Heart left ventricle (tissue), 16 donors: ENCODE measurements at regions of chr14 and their contacts with region 1.

Region 1: DNA sequence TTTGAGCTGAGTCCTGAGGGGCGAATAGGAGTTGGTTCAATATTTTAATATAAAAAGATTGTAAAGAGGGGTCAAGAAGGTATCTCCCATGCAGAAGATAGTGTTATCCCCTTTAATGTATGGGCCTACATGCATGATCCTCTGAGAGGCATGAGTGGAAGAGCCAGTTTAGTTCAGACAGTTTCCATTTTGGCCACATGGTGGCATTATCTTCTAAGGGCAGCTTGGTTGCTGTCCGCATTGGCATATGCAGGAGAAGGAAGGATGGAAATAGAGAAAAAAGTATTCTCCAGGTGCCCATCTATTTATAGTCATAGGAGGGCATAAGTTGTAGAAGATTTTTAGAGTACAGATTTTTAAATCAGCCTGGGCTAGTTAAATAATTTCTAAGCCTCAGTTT is 5.4 kb downstream of the SAMD4A start:
- DNase-seq: no peak
- ATAC-seq: no peak
- H3K4me3 ChIP-seq: no peak overlapping the region
- H3K27ac ChIP-seq: no peak overlapping the region
- H3K4me1 ChIP-seq: peaks cover 3 to 82% (median 54%) of the 10 kb centered on the region in 12 donors
- H3K27me3 ChIP-seq: no peaks in the 10 kb centered on the region
- CTCF ChIP-seq: peak; percentile 16 to 57 (median 32)
- POLR2A ChIP-seq: no peak

Region 2: GRCh38 chr14:54606178-54606577 is 33.9 kb after region 1 on chr14:
- intact Hi-C with region 1: loop called in 1 of 10 experiments (anchors 5 kb)
- DNase-seq: peak; percentile 74 to 92 (median 84)
- ATAC-seq: peak; percentile 96 to 98 (median 97)
- H3K4me3 ChIP-seq: no peak overlapping the region
- H3K27ac ChIP-seq: peak overlapping the region; percentile 46 to 96 (median 85)
- H3K4me1 ChIP-seq: peaks cover 0 to 66% (median 23%) of the 10 kb centered on the region in 12 donors
- H3K27me3 ChIP-seq: no peaks in the 10 kb centered on the region
- CTCF ChIP-seq: no peak
- POLR2A ChIP-seq: no peak

Region 3: DNA sequence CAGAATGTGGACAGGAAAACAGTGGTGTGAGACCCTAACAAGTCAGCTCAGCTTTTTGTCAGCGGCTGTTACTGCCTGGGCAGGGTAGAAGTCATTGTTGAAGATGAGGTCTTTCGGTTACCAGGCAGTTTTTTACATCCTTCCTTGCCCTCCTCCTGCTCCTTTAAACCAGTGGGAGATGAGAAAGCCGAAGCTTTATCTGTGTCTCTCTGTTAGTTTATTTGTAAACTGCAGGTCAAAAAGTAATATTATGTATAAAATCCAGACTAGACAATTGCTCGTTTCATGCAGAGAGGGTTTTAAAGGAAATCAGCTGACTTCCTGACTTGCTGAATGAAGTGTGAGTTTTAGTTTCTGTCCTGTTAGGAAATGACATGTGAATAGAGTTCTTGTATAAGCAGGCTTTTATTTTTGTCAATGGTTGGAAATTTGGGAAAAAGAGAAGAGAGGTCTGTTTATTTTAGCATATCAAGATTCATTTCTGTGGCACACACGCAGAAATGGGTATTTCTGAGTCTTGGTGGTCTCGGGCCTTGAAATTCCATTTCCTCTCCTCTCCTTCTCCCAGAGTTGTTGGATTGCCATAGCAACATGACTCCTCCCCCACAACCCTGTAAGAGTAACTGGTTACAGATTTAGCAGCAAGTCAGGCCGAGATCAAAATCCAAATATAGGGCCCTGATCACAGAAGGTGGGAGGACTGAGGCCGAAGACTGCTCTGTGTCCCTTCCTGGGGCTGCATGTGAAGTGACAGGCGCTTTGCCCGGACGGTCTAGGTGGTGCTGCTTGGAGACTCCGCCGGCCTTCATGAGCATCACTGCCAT is 55.4 kb after region 1 on chr14:
- intact Hi-C with region 1: loop called in 4 of 10 experiments (anchors 2 to 10 kb)
- DNase-seq: peak in 4 of 5 donors; percentile 59 to 76 (median 70)
- ATAC-seq: peak; percentile 91 to 94 (median 93)
- H3K4me3 ChIP-seq: peak overlapping the region in 10 of 12 donors; percentile 14 to 51 (median 32)
- H3K27ac ChIP-seq: peak overlapping the region; percentile 24 to 96 (median 72)
- H3K4me1 ChIP-seq: peaks cover 16 to 76% (median 57%) of the 10 kb centered on the region in 12 donors
- H3K27me3 ChIP-seq: no peaks in the 10 kb centered on the region
- CTCF ChIP-seq: no peak
- POLR2A ChIP-seq: no peak

Region 4: DNA sequence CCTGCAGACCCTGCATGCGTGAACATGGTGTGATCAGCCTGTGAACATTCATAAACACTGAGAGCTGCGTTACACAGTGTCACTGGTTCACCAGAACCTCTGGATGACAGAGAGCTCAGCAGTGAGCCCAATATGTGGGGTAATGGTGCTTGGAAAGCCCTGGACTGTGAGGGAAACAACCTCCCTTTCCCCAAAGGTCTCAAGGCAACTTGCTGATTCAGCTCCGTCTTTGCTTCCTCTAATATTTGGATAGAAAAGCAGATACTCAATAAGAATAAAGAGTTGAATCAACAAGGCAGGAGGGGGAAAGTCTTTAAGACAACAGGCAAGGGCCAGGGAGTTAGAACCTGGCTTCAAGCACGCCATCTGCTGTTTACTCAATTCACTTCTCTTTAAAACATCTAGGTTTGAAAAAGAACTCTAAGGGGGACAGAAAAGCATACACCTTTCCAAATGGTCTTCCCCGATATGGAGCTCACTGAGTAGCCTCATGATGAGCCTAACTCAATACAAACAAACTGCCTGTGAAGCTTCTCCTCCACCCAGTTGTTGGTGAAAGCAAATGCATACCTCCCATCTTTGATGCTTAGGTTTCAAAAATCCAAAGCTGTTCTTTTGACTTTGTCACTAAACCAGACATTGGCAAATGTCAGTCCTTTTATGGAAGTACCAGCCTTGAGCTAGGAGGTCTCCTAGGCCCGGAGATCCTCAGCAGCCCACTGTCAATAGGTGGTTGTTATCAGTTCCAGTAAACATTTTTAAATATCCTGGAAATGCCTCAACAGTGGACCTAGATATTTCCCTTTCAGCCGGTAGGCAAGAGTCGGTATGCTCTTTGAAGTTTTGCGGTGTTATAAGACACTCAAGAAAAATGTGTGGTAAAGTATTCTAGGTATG is 70.7 kb after region 1 on chr14:
- intact Hi-C with region 1: loop called in 4 of 10 experiments (anchors 5 to 10 kb)
- DNase-seq: no peak
- ATAC-seq: peak in 1 of 4 donors; percentile 14
- H3K4me3 ChIP-seq: no peak overlapping the region
- H3K27ac ChIP-seq: peak overlapping the region in 4 of 12 donors; percentile 9 to 48 (median 23)
- H3K4me1 ChIP-seq: peaks cover 3 to 73% (median 39%) of the 10 kb centered on the region in 12 donors
- H3K27me3 ChIP-seq: no peaks in the 10 kb centered on the region
- CTCF ChIP-seq: peak in 5 of 12 donors; percentile 14 to 43 (median 25)
- POLR2A ChIP-seq: no peak

Region 5: DNA sequence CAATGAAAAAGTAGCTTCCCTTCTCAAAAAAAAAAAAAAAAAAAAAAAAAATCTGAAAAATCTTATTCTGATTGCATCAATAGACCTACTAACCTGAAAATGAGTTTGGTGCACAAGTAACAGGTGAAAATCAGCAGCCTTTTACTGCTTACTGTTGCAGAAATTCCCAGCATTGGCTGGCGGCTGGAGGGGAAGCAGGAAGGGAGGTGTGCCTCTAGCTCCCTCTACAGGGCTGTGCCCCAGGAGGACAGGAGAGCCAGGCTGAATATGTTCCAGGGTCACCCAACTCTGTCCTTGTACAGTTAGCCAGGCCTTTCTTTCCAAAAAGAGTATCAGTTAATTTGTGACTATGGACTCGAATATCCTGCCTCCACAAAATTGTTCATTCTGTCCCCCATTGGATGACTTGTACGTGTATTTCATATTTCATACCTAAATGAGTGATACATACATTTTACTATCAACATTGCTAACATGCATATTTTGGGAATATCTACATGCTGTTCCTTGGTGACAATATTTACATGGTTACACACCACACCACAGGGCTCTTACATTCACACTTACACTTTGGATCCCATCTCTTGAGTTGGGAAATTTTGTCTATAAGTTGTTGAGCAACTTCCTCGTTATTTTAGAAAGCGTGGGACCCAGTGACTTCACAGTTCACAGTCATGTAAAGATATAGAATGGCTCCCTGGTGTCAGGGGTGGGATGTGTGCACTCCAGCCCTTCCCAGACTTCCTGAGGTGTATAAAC is 119.4 kb after region 1 on chr14:
- intact Hi-C with region 1: loop called in 7 of 10 experiments (anchors 2 to 5 kb)
- DNase-seq: peak; percentile 80 to 86 (median 84)
- ATAC-seq: peak; percentile 67 to 82 (median 74)
- H3K4me3 ChIP-seq: no peak overlapping the region
- H3K27ac ChIP-seq: peak overlapping the region; percentile 44 to 94 (median 70)
- H3K4me1 ChIP-seq: peaks cover 3 to 81% (median 48%) of the 10 kb centered on the region in 12 donors
- H3K27me3 ChIP-seq: no peaks in the 10 kb centered on the region
- CTCF ChIP-seq: peak; percentile 84 to 92 (median 88)
- POLR2A ChIP-seq: no peak